Panc1 (cell line): ENCODE measurements at regions of chr7 and their contacts with region 1.

Region 1: DNA sequence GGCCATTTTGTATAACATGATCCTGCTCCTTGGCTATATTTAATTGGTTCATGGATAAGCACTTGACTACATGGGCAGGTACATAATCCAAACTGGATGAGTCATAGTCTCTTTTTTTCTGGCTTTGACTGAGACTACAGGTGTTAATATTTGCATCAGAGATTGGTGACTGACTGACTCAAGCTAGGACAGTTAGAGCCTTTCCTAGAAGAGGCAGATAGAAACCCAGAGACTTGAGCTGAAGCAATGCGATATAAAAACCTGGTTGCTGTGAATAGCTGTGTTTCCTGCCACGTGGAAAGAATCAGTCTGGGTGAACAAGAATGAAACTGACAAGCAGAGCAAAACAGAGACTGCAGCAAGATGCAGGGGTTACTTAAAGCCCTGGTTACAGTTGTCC is 81.0 kb downstream of the SAMD9 start:
- DNase-seq: no peak
- ATAC-seq: no peak
- H3K4me3 ChIP-seq: no peak overlapping the region
- H3K27ac ChIP-seq: no peak overlapping the region
- H3K4me1 ChIP-seq: no peaks in the 10 kb centered on the region; the same call in none of the 2 replicates
- H3K27me3 ChIP-seq: no peaks in the 10 kb centered on the region
- CTCF ChIP-seq: no peak

Region 2: DNA sequence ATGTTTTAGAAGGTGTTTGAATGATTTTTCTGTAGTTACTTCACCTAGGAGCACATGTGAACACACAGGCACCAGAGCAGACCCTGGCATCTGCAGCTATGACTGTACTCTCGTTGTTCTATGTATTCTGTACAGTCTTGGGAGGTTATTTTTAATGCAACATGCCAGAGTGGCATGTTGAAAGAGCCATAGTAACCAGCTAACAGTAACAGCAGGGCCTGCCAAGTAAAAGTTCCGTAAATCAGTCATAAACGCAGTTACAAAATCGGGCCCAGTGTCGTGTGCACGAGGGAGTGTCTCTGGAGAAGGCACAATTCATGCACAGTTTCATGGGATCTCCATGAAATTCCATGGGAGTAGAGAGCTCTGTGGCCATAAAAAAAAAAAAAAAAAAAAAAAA is 92.2 kb before region 1 on chr7:
- CTCF ChIA-PET with region 1: no interaction called
- POLR2A ChIA-PET with region 1: no interaction called
- in situ Hi-C with region 1: no loop called
- intact Hi-C with region 1: loop called (anchors 10 kb)
- DNase-seq: no peak
- ATAC-seq: no peak
- H3K4me3 ChIP-seq: no peak overlapping the region
- H3K27ac ChIP-seq: no peak overlapping the region
- H3K4me1 ChIP-seq: no peaks in the 10 kb centered on the region
- H3K27me3 ChIP-seq: no peaks in the 10 kb centered on the region
- CTCF ChIP-seq: no peak